Astrocyte of the cerebellum (primary cell): ENCODE measurements at regions of chr20 and their contacts with region 1.

Region 1: DNA sequence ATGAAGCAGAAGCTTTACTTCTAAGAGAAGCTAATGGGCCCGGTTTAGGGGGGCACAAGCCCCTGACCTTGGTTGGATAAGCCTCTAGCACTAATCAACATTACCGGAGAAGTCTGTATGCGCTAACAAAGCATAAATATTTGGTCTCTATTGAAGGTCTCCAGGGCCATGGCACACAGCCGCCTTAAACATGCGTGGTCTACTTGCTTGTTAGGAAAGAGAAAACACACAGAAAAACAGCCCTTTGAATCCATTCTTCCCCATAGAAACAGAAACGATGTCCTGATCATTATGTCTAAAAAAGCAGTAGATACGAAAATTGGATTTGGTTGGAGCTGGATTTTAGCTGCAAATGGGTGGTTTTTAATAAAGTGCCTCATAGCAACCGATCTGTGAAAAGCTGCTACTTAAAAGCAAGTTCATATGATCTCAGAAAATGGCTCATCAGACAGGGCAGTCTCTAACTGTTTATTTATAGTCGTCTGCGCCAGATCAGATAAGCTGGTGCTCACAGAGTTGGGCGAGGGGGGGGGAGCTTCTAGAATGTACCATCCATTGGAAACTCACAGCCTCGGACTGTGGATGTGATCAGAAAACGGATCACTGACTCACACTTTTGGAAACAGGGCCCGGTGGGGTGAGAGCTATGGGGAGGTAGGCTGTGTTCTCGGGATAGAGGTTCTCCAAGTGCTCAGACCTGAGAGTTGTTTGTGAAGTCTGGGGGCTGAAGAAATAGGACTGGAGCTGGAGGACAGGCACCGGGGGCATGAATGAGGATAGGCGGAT is 35.3 kb upstream of the APCDD1L start:
- DNase-seq: peak; percentile 61
- H3K4me3 ChIP-seq: no peak overlapping the region
- CTCF ChIP-seq: no peak

Region 2: DNA sequence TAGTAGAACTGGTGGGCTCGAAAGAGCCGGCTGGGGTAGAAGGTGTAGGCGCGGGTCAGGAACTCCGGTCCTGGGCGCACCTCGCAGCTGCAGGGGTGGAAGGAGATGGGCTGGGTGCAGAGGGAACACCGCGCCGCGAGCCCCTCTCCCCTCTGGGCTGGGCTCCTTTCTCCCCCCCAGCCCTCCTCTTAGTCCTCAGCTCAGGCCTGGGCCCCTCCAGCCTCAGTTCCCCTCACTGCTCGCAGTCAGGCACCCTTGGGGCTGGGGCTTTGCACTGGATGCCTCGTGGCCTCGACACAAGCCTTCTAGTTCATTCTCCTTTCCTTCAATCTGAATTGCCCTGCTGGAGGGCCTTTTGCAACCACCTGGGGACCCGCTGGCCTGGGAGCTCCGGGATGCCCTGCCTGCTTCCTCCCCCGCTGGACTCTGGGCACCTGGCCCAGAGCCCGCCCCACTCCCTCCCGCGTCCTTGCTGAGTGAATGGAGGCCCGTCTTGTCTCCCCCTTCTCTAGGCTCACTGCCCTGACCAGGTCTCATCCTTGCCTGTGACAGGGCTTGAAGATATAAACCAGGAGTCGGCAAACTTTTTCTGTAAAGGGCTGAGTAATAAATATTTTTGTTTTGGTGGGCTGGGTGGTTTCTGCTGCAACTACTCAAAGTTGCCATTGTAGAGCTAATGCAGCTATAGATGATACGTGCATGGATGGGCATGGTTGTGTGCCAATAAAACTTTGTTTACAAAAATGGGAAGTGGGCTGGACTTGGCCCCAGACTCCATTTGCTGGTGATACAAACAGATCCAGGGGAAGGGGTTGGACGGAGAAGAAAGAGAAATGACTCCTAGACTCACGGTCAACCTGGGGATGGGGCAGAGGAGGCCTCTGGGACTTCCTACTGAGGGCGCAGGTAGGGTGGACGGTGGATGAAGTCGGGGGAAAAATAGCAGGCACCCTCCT is 82.6 kb before region 1 on chr20:
- in situ Hi-C with region 1: no loop called
- DNase-seq: no peak
- H3K4me3 ChIP-seq: no peak overlapping the region
- CTCF ChIP-seq: no peak

Region 3: DNA sequence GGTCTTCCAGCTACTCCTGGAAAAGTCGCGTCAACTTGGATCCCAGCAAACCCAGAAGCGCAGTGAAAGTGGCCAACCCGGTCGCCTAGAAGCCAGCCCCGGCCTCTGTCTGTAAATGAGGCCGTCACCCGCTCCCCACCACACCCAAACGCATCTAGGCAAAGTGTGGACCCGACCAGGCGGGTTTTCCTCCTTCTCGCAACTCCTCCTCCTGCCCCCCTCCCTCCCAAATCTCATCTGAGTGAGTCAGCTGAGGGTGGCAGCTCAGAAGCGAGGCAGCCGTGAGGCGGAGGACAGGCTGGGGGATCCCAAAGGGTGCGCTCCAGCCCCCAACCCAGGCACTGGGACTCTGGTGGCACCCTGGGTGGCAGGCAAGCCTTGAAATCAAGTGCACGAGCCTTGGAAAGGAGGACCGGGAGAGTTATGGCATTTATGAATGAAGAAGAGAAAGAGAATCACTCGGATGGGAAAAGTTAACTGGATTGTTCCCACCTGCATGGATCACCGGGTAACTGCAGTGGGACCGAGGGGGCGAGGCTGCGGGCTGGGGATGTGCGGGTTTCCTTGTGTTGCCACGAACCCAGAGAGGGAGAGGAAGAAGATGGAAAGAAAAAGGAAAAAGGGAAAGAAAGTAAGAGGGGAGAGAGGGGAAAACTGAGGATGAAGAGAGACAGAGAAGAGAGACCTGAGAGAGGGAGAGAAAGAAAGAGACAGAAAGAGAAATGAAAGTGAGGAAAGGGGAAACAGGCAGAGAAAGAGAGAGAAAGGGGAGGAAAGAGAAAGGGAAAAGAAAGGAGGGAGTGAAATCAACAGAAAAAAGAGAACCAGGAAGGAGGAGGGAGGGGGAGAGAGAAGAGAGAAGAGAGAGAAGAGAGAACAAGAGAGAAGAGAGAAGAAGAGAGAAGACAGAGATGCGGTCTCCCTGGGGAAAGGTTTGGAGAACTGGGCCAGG is 35.0 kb before region 1 on chr20 and contains the start of gene APCDD1L:
- in situ Hi-C with region 1: no loop called
- DNase-seq: peak; percentile 6
- H3K4me3 ChIP-seq: peak within 1 kb of the TSS; percentile 45
- CTCF ChIP-seq: no peak

Region 4: DNA sequence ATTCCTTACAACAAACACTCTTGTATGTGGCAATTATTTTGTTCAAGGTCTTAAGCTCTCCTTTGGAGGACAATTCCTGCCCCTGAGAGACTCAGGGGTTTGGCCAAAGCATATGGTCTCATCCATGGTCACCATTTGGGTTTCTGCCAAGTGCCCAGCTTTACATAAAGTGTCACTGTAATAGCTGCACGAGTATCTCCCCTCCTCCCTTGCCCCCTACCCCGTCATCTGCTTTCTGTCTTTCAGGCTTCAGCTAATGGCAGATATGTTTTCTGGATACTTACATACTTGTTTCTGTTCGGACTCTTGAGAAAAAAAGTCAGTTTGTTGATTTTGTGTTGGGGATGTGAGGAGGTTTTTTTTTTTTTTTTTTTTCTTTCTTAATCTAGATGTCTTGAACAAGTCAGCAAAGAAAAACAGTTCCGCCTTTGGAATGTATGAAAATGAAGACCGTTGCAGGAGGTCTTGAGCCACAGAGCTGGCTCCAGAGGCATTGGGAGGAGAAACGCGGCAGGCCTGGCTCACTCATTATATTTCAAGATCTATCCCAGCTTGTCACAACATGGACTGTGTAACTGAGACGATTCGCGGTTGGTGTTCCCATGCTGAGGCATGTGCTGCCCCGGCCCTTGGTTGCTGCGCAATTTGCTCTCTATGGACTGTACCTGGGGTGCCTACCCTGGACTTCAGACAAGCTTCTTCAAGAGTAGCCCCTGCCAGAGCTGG is 68.0 kb after region 1 on chr20:
- in situ Hi-C with region 1: loop called (anchors 5 kb)
- DNase-seq: peak; percentile 90
- H3K4me3 ChIP-seq: no peak overlapping the region
- CTCF ChIP-seq: no peak

Region 5: GRCh38 chr20:58864350-58864749 is 313.9 kb after region 1 on chr20:
- in situ Hi-C with region 1: no loop called
- DNase-seq: no peak
- H3K4me3 ChIP-seq: no peak overlapping the region
- CTCF ChIP-seq: peak; percentile 12